ENCODE measurements at regions of chr9 and their contacts with region 1.

Region 1: GRCh38 chr9:105708405-105708804 is 14.1 kb downstream of the TMEM38B start:
- DNase-seq: no peak

Region 2: GRCh38 chr9:105647595-105648349 is 60.6 kb before region 1 on chr9:
- intact Hi-C with region 1: loop called in 1 of 2 experiments (anchors 1 kb)
- DNase-seq: no peak